K562 (cell line): ENCODE measurements at regions of chr12 and their contacts with region 1.

Region 1: DNA sequence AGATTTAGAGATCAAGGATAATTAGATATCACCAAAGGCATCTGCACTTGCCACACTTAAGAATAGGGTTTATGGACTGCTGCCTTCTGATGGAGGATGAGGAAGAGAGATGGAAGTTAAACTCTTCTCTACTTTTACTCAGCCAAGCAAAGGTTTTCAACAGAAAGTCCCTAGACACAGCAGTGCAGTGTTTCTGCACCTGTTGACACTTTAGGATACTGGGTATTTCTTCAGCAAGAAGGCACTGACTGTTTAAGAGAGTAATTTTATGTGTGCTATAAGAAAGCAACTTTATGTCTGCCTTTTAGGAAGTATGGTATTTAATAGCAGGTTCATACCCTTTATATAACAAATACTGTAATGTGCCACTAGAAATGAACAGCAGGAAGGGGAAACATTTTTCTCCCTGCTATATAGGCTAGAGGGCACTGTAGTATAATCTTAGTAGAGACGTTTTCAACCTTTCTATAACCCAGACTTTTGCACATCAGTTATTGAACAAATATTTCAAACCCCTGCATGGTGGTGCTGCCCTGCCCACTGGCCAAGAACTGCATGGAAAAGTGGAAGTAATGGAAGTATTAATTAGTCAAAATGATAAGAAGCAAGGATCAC is 225.0 kb upstream of the GRIP1 start:
- DNase-seq: no peak
- ATAC-seq: peak; percentile 52
- H3K4me3 ChIP-seq: no peak overlapping the region
- H3K27ac ChIP-seq: no peak overlapping the region
- H3K4me1 ChIP-seq: no peaks in the 10 kb centered on the region
- H3K27me3 ChIP-seq: no peaks in the 10 kb centered on the region
- CTCF ChIP-seq: peak in 1 of 3 experiments; percentile 41; a peak in 2 of 6 replicates
- EP300 ChIP-seq: no peak
- POLR2A ChIP-seq: no peak
- RAD21 ChIP-seq: no peak

Region 2: GRCh38 chr12:67018105-67018504 is 114.2 kb after region 1 on chr12:
- CTCF ChIA-PET with region 1: no interaction called
- POLR2A ChIA-PET with region 1: no interaction called
- in situ Hi-C with region 1: no loop called
- intact Hi-C with region 1: loop called (anchors 1 kb)
- DNase-seq: peak in 2 of 4 experiments; percentile 18 to 24
- ATAC-seq: peak; percentile 75
- H3K4me3 ChIP-seq: no peak overlapping the region
- H3K27ac ChIP-seq: no peak overlapping the region
- H3K4me1 ChIP-seq: no peaks in the 10 kb centered on the region
- H3K27me3 ChIP-seq: no peaks in the 10 kb centered on the region
- CTCF ChIP-seq: peak; percentile 20 to 52 (median 21); a peak in 4 of 6 replicates
- EP300 ChIP-seq: no peak
- POLR2A ChIP-seq: no peak
- RAD21 ChIP-seq: no peak